Ascending aorta (tissue), 2 donors: ENCODE measurements at regions of chr5 and their contacts with region 1.

Region 1: GRCh38 chr5:72510610-72511181 is 3.5 kb upstream of the ZNF366 start:
- DNase-seq: peak; percentile 9 to 87
- H3K4me3 ChIP-seq: no peak overlapping the region
- H3K27ac ChIP-seq: peak overlapping the region; percentile 71 to 83
- H3K4me1 ChIP-seq: peaks cover 5 to 35% of the 10 kb centered on the region in 2 donors
- H3K27me3 ChIP-seq: no peaks in the 10 kb centered on the region
- CTCF ChIP-seq: no peak

Region 2: GRCh38 chr5:72125941-72126620 is 384.6 kb before region 1 on chr5:
- intact Hi-C with region 1: loop called (anchors 10 kb)
- DNase-seq: no peak
- H3K4me3 ChIP-seq: peak overlapping the region in 1 of 2 donors; percentile 14
- H3K27ac ChIP-seq: peak overlapping the region; percentile 44 to 93
- H3K4me1 ChIP-seq: peaks cover 16 to 82% of the 10 kb centered on the region in 2 donors
- H3K27me3 ChIP-seq: no peaks in the 10 kb centered on the region
- CTCF ChIP-seq: no peak

Region 3: GRCh38 chr5:72378636-72379290 is 131.9 kb before region 1 on chr5:
- intact Hi-C with region 1: loop called (anchors 2 kb)
- DNase-seq: peak in 1 of 2 donors; percentile 87
- H3K4me3 ChIP-seq: no peak overlapping the region
- H3K27ac ChIP-seq: peak overlapping the region in 1 of 2 donors; percentile 46
- H3K4me1 ChIP-seq: peaks cover 3 to 14% of the 10 kb centered on the region in 2 donors
- H3K27me3 ChIP-seq: no peaks in the 10 kb centered on the region
- CTCF ChIP-seq: no peak

Region 4: DNA sequence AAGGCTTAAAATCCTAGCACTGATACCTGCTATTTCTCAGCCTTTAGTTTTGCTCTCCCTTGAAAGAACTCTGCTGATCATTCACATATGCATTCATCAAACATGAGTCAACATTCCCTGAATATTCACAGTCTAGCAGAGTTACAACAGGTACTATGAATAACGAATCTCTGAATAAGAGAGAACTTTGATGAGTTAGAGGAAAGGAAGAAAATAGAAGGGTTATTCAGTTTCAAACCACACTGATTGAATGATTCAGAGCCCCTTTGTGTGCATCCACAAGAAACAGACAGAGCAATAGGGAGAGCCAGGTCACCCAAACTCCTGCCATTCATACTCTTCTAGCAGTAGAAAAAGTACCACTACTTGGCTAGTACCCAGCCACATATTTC is 901.9 kb after region 1 on chr5:
- intact Hi-C with region 1: no loop called
- DNase-seq: no peak
- H3K4me3 ChIP-seq: no peak overlapping the region
- H3K27ac ChIP-seq: no peak overlapping the region
- H3K4me1 ChIP-seq: peaks cover 0 to 6% of the 10 kb centered on the region in 2 donors
- H3K27me3 ChIP-seq: no peaks in the 10 kb centered on the region
- CTCF ChIP-seq: no peak